Activated CD4-positive, alpha-beta T cell treated with anti-CD3 and anti-CD28 coated beads, Interleukin-2, amount 10 ng/mL, durations not matched to agents 24 days and 14 days (primary cell): ENCODE measurements at regions of chr18 and their contacts with region 1.

Region 1: GRCh38 chr18:58043491-58044379 is at the start of gene NEDD4L:
- DNase-seq: peak; percentile 91
- H3K4me3 Mint-ChIP-seq: peak within 1 kb of the TSS; percentile 90
- H3K27ac Mint-ChIP-seq: peak within 1 kb of the TSS; percentile 60
- H3K4me1 Mint-ChIP-seq: peaks cover 21% of the 10 kb centered on the region
- H3K27me3 Mint-ChIP-seq: peaks cover 60% of the 10 kb centered on the region
- total RNA-seq, gene NEDD4L: 3.5 and 4.2 TPM in 2 replicates

Region 2: GRCh38 chr18:57586251-57587049 is 457.3 kb before region 1 on chr18 and contains the start of gene FECH:
- intact Hi-C with region 1: loop called (anchors 2 kb)
- DNase-seq: peak; percentile 94
- H3K4me3 Mint-ChIP-seq: peak within 1 kb of the TSS; percentile 85
- H3K27ac Mint-ChIP-seq: peak within 1 kb of the TSS; percentile 80
- H3K4me1 Mint-ChIP-seq: peaks cover 17% of the 10 kb centered on the region
- H3K27me3 Mint-ChIP-seq: no peaks in the 10 kb centered on the region
- total RNA-seq, gene FECH: 22.4 and 25.1 TPM in 2 replicates

Region 3: GRCh38 chr18:57841568-57841967 is 202.2 kb before region 1 on chr18:
- intact Hi-C with region 1: loop called (anchors 2 kb)
- DNase-seq: peak; percentile 62
- H3K4me3 Mint-ChIP-seq: peak overlapping the region; percentile 50
- H3K27ac Mint-ChIP-seq: peak overlapping the region; percentile 55
- H3K4me1 Mint-ChIP-seq: peaks cover 24% of the 10 kb centered on the region
- H3K27me3 Mint-ChIP-seq: peaks cover 44% of the 10 kb centered on the region

Region 4: GRCh38 chr18:57881818-57882413 is 161.8 kb before region 1 on chr18:
- intact Hi-C with region 1: no loop called
- DNase-seq: peak; percentile 82
- H3K4me3 Mint-ChIP-seq: no peak overlapping the region
- H3K27ac Mint-ChIP-seq: no peak overlapping the region
- H3K4me1 Mint-ChIP-seq: no peaks in the 10 kb centered on the region
- H3K27me3 Mint-ChIP-seq: peaks cover 2% of the 10 kb centered on the region

Region 5: GRCh38 chr18:58080451-58080850 is 36.7 kb after region 1 on chr18:
- intact Hi-C with region 1: no loop called
- DNase-seq: no peak
- H3K4me3 Mint-ChIP-seq: no peak overlapping the region
- H3K27ac Mint-ChIP-seq: no peak overlapping the region
- H3K4me1 Mint-ChIP-seq: no peaks in the 10 kb centered on the region
- H3K27me3 Mint-ChIP-seq: peaks cover 7% of the 10 kb centered on the region

Region 6: GRCh38 chr18:58135701-58136331 is 92.1 kb after region 1 on chr18:
- intact Hi-C with region 1: loop called (anchors 1 kb)
- DNase-seq: peak; percentile 81
- H3K4me3 Mint-ChIP-seq: no peak overlapping the region
- H3K27ac Mint-ChIP-seq: no peak overlapping the region
- H3K4me1 Mint-ChIP-seq: peaks cover 7% of the 10 kb centered on the region
- H3K27me3 Mint-ChIP-seq: peaks cover 6% of the 10 kb centered on the region

Region 7: GRCh38 chr18:58321986-58322385 is 278.3 kb after region 1 on chr18:
- intact Hi-C with region 1: loop called (anchors 5 kb)
- DNase-seq: peak; percentile 85
- H3K4me3 Mint-ChIP-seq: no peak overlapping the region
- H3K27ac Mint-ChIP-seq: no peak overlapping the region
- H3K4me1 Mint-ChIP-seq: peaks cover 4% of the 10 kb centered on the region
- H3K27me3 Mint-ChIP-seq: peaks cover 12% of the 10 kb centered on the region